A549 (cell line): ENCODE measurements at regions of chr15 and their contacts with region 1.

Region 1: GRCh38 chr15:63362196-63362595 is 19.4 kb downstream of the CA12 start:
- DNase-seq: no peak
- ATAC-seq: no peak
- H3K4me3 ChIP-seq: no peak overlapping the region
- H3K27ac ChIP-seq: peak overlapping the region in 1 of 2 experiments; percentile 37; a peak in 3 of 6 replicates
- H3K4me1 ChIP-seq: peaks cover 48% of the 10 kb centered on the region
- CTCF ChIP-seq: no peak
- EP300 ChIP-seq: no peak
- POLR2A ChIP-seq: no peak
- RAD21 ChIP-seq: no peak

Region 2: DNA sequence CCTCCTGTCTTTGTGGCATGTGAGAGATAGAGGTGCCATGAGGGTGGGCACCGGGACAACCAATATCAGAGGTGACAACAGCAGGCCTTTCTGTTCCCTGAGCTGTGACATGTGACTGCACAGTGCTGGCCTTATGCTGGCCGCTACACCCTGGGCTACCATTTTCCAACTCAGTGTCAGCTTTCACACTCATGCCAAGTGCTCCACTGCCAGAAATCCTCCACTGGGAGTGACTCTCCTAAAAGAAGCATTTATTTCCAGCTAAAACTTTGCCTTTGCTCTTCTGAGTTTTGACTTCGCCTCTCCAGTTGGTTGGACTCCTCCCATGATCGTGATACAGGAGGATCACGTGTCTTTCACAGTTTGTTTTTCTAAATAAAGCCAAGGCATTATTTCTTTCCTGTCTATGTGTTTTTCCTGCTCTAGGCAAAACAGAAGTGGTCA is 12.0 kb before region 1 on chr15:
- CTCF ChIA-PET with region 1: interaction called, 16 read pairs
- POLR2A ChIA-PET with region 1: no interaction called
- DNase-seq: no peak
- ATAC-seq: no peak
- H3K4me3 ChIP-seq: no peak overlapping the region
- H3K27ac ChIP-seq: peak overlapping the region in 1 of 2 experiments; percentile 64; a peak in 2 of 6 replicates
- H3K4me1 ChIP-seq: peaks cover 79% of the 10 kb centered on the region
- CTCF ChIP-seq: no peak
- EP300 ChIP-seq: no peak
- POLR2A ChIP-seq: no peak
- RAD21 ChIP-seq: no peak